GM23248 (cell line): ENCODE measurements at regions of chrX and their contacts with region 1.

Region 1: DNA sequence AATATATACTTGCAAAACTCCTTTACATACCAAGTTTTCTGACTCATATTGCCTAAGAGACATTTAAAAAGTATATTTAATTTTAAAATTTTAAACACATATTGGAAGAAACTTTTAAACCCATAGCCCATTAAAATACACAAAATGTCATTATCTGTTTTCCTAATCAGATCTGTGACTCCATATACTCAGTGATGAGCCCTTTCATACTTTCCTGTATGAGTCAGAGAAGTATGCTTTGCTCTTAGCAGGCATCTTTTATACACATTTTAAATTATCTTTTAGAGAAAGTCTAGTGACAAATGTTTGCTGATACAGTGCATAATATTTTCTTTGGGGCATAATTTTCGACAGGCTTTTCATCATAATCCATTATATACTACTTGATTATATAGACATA is 26.4 kb downstream of the SPIN3 start:
- DNase-seq: peak; percentile 55
- H3K4me3 ChIP-seq: no peak overlapping the region
- H3K27ac ChIP-seq: no peak overlapping the region
- H3K4me1 ChIP-seq: peaks cover 11% of the 10 kb centered on the region; the same call in 1 of the 2 replicates
- H3K27me3 ChIP-seq: no peaks in the 10 kb centered on the region

Region 2: GRCh38 chrX:56563231-56564161 is 405.5 kb before region 1 on chrX and contains the start of gene UBQLN2:
- in situ Hi-C with region 1: no loop called
- DNase-seq: peak; percentile 85
- H3K4me3 ChIP-seq: peak within 1 kb of the TSS; percentile 97
- H3K27ac ChIP-seq: peak within 1 kb of the TSS; percentile 99
- H3K4me1 ChIP-seq: peaks cover 27% of the 10 kb centered on the region
- H3K27me3 ChIP-seq: no peaks in the 10 kb centered on the region
- total RNA-seq, gene UBQLN2: 11.4 and 11.9 TPM in 2 replicates

Region 3: GRCh38 chrX:56615282-56615681 is 353.7 kb before region 1 on chrX:
- in situ Hi-C with region 1: no loop called
- DNase-seq: no peak
- H3K4me3 ChIP-seq: no peak overlapping the region
- H3K27ac ChIP-seq: no peak overlapping the region
- H3K4me1 ChIP-seq: no peaks in the 10 kb centered on the region
- H3K27me3 ChIP-seq: no peaks in the 10 kb centered on the region

Region 4: DNA sequence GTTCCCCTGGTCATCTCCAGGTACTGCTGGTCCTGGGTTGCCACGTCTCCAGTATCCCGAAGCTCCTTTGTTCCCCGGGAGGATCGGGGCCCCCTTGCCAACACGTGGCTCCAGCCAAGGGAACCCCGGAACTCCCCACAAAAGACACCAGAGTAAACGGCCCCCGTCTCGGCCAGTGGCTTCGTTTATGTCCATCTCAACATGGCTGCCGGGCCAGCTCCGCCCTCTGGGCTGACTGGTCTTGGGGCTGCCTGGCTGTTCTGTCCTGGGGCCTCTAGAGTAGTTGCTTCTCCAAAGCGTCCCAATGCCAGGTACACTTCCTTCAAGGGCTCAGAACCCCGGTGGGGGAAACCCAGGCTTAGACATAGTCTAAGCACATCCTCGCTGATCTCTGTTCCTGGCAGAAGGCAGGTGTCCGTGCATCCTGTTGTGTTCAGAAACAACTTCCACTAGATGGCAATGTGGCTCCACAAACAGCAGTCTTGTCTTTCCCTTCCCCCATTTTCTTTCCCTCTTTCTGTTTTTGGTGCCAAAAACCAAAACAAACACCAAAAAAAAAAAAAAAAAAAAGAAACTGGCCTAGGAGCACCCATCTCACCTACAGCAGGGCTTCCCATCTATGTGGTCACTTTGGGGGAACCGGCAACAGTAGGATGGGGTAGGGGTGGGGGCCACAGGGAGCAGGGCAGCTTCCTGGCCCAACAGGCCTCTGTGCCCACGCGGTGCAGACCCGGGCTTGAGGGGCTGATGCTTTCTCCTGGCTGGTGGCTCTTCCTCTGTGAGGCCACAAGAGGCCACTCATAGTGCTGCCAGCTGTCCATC is 204.6 kb before region 1 on chrX:
- in situ Hi-C with region 1: no loop called
- DNase-seq: peak; percentile 75
- H3K4me3 ChIP-seq: no peak overlapping the region
- H3K27ac ChIP-seq: 0 out of 2 replicates have a peak overlapping the region, but pooled peaks have one; percentile 15
- H3K4me1 ChIP-seq: peaks cover 24% of the 10 kb centered on the region
- H3K27me3 ChIP-seq: no peaks in the 10 kb centered on the region

Region 5: GRCh38 chrX:56802921-56803849 is 165.8 kb before region 1 on chrX:
- in situ Hi-C with region 1: loop called (anchors 25 kb)
- DNase-seq: peak; percentile 70
- H3K4me3 ChIP-seq: no peak overlapping the region
- H3K27ac ChIP-seq: no peak overlapping the region
- H3K4me1 ChIP-seq: peaks cover 9% of the 10 kb centered on the region; the same call in 1 of the 2 replicates
- H3K27me3 ChIP-seq: no peaks in the 10 kb centered on the region